Heart left ventricle (tissue), 16 donors: ENCODE measurements at regions of chr4 and their contacts with region 1.

Region 1: GRCh38 chr4:165553221-165553810 is 174.5 kb downstream of the CPE start:
- DNase-seq: no peak
- ATAC-seq: no peak
- H3K4me3 ChIP-seq: no peak overlapping the region
- H3K27ac ChIP-seq: no peak overlapping the region
- H3K4me1 ChIP-seq: no peaks in the 10 kb centered on the region
- H3K27me3 ChIP-seq: no peaks in the 10 kb centered on the region
- CTCF ChIP-seq: no peak
- POLR2A ChIP-seq: no peak

Region 2: DNA sequence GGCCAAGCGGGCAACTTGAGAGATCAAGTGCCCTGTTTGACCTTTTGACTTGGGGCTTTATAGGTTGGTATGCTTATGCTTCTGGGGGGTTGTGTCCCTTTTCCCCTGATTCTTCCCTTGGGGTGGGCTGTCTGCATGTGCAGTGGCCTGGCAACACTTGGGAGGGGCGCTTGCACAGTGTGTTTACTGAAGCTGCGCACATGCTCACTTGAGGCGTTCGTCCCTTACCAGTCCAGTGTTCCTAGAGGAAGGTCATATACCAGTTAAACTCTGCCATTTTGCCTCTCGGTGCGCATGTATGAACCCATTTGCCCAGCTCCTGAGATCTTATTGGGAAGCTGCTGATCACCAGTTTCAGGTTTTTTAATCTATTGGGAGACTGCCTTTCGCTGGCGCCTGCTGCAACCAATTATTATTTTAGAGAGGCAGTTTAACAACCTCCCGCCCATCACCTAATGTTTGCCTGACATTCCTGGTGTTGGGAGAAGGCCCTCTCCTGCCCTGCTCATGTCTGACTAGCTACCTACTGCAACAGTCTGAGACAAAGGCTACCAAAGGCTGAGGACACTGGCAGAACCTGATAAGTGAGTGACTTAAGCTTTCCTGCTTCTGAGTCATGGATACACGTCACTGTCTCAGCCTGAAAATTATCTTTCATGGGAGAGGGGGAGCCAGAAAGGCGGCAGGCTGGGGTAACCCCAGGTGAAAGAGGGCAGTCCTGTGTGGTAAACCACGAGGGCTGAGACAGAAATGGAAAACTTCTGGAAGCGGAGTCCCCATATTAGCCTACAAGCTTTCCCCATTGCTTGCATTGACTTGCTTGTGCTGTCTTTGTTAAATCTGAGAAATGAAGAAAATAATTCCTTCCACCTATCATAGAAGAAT is 76.9 kb before region 1 on chr4:
- intact Hi-C with region 1: no loop called
- DNase-seq: no peak
- ATAC-seq: no peak
- H3K4me3 ChIP-seq: no peak overlapping the region
- H3K27ac ChIP-seq: no peak overlapping the region
- H3K4me1 ChIP-seq: no peaks in the 10 kb centered on the region
- H3K27me3 ChIP-seq: no peaks in the 10 kb centered on the region
- CTCF ChIP-seq: no peak
- POLR2A ChIP-seq: no peak

Region 3: DNA sequence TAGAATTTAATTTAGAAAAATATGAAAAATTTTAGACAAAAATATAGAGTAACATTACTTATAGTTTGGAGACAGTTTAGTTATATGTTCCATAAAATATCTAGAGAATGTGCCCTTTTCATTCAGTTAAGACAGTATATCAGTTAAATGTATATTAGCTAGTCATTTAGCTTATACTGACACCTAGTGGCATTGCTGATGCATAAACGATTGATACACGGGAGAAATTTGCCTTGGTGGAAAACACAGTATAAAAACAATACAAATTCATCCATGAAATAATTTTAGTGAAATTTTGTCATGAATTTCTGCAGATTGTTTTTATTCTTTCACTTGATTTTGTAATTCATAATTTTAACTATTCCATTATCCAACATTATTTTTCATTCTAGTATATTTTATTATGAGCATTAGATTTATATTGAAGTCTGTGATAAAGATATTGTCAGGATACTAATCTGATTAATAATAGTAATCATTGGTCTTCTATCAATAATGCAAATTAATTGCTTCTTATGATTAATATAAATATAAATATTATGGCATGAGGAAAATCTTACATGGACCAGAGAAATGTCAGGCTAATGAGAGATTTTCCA is 538.7 kb after region 1 on chr4:
- intact Hi-C with region 1: loop called in 1 of 10 experiments (anchors 5 kb)
- DNase-seq: no peak
- ATAC-seq: no peak
- H3K4me3 ChIP-seq: no peak overlapping the region
- H3K27ac ChIP-seq: no peak overlapping the region
- H3K4me1 ChIP-seq: no peaks in the 10 kb centered on the region
- H3K27me3 ChIP-seq: no peaks in the 10 kb centered on the region
- CTCF ChIP-seq: peak; percentile 65 to 89 (median 76)
- POLR2A ChIP-seq: no peak